Common myeloid progenitor, CD34-positive (primary cell): ENCODE measurements at regions of chr17 and their contacts with region 1.

Region 1: DNA sequence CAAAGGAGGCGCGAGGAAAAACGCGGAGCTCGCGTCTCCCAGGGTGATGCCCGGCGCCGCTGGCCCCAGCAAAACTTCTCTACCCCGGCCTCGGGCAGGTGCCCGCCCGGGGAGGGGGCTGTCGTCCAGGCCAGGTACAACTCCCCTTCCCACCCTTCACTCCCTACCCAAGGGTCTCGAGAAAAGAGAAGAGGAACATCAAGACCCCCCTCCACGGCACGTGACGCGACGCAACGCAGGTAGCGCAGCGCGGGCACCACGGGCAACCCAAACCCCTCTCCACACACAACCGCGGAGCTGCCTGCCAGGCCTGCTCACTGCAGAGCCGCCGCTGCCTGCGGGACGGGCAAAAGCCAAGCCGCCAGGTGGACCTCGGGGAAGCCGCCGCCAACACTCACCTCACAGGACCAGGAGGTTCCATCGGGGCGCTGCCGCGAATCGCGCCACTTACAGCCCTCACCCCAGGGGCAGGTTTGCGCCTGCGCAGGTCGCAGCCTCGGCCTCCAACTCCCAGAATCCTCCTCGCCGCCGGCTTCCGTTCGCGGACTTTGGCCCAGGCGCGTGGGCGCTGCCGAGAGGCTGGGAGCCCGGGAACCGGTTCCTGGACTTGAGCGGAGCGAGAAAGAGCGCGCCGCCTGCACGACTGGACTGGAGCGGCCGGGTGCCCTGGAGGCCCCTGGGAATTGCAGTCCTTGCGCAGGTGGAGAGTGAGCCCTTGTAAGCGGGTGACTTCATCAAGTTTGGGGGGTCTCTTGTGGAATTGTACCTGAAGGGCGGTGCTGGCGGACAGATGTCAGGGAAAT is at the start of gene ZNF232:
- DNase-seq: peak; percentile 91 to 94 (median 94)
- H3K4me3 ChIP-seq: peak within 1 kb of the TSS; percentile 41 to 90 (median 73)
- H3K27ac ChIP-seq: peak within 1 kb of the TSS in 1 of 2 experiments; percentile 68
- H3K4me1 ChIP-seq: peaks cover 6 to 23% (median 15%) of the 10 kb centered on the region in 4 experiments
- H3K27me3 ChIP-seq: peaks cover 0 to 20% (median 5%) of the 10 kb centered on the region in 5 experiments

Region 2: DNA sequence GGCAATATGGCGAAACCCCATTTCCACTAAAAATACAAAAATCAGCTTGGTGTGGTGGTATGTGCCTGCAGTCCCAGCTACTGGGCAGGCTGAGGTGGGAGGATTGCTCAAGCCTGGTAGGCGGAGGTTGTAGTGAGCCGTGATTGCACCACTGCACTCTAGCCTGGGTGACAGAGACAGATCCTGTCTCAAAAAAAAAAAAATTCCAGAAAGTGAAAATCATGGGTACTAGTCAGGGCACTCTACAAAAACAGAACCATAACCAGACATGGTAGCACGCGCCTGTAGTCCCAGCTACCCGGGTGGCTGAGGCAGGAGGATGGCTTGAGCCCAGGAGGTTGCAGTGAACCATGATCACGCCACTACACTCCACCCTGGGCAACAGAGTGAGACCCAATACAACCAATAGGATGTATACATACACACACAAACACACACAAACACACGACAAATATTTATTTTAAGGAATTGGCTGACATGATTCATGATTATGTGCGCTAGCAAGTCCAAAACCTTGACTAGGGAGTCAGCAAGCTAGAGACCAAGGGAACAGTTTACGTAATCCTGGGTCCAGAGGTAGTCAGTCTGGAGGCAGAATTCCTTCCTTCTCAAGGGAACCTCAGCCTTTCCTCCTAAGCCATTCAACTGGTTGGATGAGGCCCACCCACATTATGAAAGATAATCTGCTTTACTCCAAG is 191.1 kb before region 1 on chr17:
- CTCF ChIA-PET with region 1: no interaction called
- POLR2A ChIA-PET with region 1: no interaction called
- DNase-seq: no peak
- H3K4me3 ChIP-seq: no peak overlapping the region
- H3K27ac ChIP-seq: no peak overlapping the region
- H3K4me1 ChIP-seq: peaks cover 0 to 7% (median 0%) of the 10 kb centered on the region in 4 experiments
- H3K27me3 ChIP-seq: no peaks in the 10 kb centered on the region

Region 3: DNA sequence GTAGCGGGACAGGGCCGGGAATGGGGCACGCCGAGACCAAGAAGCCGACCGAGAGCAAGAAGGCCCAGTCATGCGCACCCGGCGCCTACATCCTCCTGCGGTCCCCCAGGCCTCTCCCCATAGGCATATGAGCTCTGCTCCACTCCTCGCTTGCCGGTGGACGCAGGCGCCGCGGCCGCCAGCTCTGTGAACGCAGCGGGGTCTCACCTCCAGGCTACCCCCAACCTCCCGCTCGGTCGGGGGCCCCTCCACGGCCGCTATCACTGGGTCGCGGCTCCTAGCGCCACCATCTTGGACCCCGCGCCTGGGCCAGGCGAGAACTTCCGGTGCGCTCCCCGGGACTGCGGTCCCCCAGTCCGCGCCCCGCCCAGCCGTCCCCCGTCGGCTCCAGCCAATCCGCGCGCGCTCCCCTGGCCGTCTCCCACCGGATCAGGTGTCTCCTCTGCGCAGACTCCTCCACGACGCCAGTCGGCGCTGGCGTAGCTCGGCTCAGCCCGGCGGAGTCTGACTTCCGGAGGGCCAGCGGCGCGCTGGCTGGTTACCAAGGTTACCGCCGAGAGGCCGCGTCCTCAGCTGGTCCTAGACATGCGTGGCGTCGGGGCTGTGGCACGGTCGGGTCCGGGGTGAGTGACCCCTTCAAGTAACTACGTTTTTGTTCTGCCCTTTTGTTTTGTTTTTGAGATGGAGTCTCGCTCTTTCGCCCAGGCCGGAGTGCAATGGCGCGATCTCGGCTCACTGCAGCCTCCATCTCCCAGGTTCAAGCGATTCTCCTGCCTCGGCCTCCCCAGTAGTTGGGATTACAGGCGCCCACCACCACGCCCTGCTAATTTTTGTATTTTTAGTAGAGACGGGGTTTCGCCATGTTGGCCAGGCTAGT is 80.2 kb after region 1 on chr17 and contains the start of gene ZNF594:
- CTCF ChIA-PET with region 1: no interaction called
- POLR2A ChIA-PET with region 1: interaction called, 12 read pairs
- DNase-seq: peak; percentile 96 to 98 (median 97)
- H3K4me3 ChIP-seq: peak within 1 kb of the TSS; percentile 78 to 94 (median 88)
- H3K27ac ChIP-seq: peak within 1 kb of the TSS; percentile 66 to 89
- H3K4me1 ChIP-seq: peaks cover 0 to 13% (median 7%) of the 10 kb centered on the region in 4 experiments
- H3K27me3 ChIP-seq: no peaks in the 10 kb centered on the region